Gastrocnemius medialis (tissue), 4 donors: ENCODE measurements at regions of chr16 and their contacts with region 1.

Region 1: GRCh38 chr16:57300387-57301125 is 16.1 kb upstream of the PLLP start:
- DNase-seq: peak; percentile 99
- ATAC-seq: peak; percentile 92 to 93
- H3K4me3 ChIP-seq: peak overlapping the region; percentile 46 to 65 (median 56)
- H3K27ac ChIP-seq: peak overlapping the region; percentile 86 to 98 (median 88)
- H3K4me1 ChIP-seq: peaks cover 21 to 28% of the 10 kb centered on the region in 2 donors
- H3K27me3 ChIP-seq: no peaks in the 10 kb centered on the region
- CTCF ChIP-seq: peak; percentile 90 to 99 (median 94)
- POLR2A ChIP-seq: no peak

Region 2: DNA sequence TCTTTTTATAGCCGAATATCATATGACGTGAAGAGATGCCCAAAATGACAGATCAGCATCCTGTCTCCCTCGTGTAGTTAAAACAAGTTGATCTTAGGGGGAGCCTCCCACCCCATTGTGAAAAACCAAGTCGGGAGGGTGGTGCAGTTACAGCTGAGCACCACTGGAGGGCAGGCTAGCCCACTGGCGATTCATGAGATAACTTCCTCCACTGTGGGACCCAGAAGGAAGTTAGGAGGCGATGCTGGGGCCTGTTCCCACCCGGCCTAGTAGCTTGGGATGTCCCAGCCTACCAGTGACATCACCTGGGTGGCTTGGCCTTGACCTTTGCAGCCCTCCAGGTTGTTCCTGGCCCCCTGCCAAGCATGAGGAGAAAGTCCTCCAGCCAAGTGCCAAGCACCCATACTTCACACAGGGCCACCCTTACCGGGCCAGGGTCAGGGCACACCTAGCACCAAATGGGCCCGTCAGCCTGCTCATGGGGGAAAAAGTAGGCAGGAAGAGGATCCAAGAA is 216.2 kb before region 1 on chr16:
- in situ Hi-C with region 1: no loop called
- intact Hi-C with region 1: loop called (anchors 1 kb)
- DNase-seq: peak; percentile 32 to 57
- ATAC-seq: peak; percentile 72 to 84
- H3K4me3 ChIP-seq: no peak overlapping the region
- H3K27ac ChIP-seq: no peak overlapping the region
- H3K4me1 ChIP-seq: no peaks in the 10 kb centered on the region
- H3K27me3 ChIP-seq: no peaks in the 10 kb centered on the region
- CTCF ChIP-seq: peak; percentile 82 to 95 (median 92)
- POLR2A ChIP-seq: no peak

Region 3: DNA sequence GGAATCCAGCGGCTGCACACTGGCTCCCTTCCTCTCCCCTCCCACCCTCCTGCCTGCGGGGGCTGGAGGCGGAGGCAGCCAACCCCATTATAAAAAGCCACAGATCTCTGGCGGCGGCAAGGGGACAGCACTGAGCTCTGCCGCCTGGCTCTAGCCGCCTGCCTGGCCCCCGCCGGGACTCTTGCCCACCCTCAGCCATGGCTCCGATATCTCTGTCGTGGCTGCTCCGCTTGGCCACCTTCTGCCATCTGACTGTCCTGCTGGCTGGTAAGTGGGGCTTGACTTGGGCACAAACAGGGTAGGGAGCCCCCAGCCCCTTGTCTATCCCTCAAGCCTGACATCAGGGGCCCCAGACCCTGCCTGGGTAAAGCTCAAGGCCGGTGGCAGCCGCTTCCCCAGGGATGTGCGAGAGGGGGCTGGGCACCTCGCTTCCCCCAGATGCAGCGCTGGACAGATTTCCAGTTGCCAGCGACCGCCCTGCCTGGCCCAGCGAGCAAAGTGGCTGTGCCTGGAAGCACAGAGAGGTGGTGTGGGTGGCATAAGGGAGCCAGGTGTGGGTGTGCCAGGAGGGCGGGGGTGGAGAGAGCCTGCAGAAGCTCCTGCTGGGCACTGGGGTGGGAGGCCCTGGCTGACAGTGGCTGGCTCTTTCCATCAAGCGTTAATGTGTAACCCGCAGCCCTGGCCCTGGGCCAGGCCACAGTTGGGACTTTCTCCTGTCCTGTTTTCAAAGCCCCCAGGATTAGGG is 72.0 kb after region 1 on chr16 and contains the start of gene CX3CL1:
- in situ Hi-C with region 1: no loop called
- intact Hi-C with region 1: loop called (anchors 5 kb)
- DNase-seq: no peak
- ATAC-seq: peak in 1 of 2 donors; percentile 67
- H3K4me3 ChIP-seq: peak within 1 kb of the TSS; percentile 51 to 63 (median 53)
- H3K27ac ChIP-seq: peak within 1 kb of the TSS; percentile 79 to 83 (median 82)
- H3K4me1 ChIP-seq: no peaks in the 10 kb centered on the region
- H3K27me3 ChIP-seq: peaks cover 5 to 11% (median 6%) of the 10 kb centered on the region in 3 donors
- CTCF ChIP-seq: no peak
- POLR2A ChIP-seq: peak; percentile 50 to 74
- total RNA-seq, gene CX3CL1: 2.2 to 15.7 (median 6.7) TPM

Region 4: GRCh38 chr16:57386381-57386951 is 85.9 kb after region 1 on chr16:
- in situ Hi-C with region 1: no loop called
- intact Hi-C with region 1: no loop called
- DNase-seq: no peak
- ATAC-seq: no peak
- H3K4me3 ChIP-seq: no peak overlapping the region
- H3K27ac ChIP-seq: no peak overlapping the region
- H3K4me1 ChIP-seq: peaks cover 0 to 3% of the 10 kb centered on the region in 2 donors
- H3K27me3 ChIP-seq: no peaks in the 10 kb centered on the region
- CTCF ChIP-seq: no peak
- POLR2A ChIP-seq: no peak

Region 5: DNA sequence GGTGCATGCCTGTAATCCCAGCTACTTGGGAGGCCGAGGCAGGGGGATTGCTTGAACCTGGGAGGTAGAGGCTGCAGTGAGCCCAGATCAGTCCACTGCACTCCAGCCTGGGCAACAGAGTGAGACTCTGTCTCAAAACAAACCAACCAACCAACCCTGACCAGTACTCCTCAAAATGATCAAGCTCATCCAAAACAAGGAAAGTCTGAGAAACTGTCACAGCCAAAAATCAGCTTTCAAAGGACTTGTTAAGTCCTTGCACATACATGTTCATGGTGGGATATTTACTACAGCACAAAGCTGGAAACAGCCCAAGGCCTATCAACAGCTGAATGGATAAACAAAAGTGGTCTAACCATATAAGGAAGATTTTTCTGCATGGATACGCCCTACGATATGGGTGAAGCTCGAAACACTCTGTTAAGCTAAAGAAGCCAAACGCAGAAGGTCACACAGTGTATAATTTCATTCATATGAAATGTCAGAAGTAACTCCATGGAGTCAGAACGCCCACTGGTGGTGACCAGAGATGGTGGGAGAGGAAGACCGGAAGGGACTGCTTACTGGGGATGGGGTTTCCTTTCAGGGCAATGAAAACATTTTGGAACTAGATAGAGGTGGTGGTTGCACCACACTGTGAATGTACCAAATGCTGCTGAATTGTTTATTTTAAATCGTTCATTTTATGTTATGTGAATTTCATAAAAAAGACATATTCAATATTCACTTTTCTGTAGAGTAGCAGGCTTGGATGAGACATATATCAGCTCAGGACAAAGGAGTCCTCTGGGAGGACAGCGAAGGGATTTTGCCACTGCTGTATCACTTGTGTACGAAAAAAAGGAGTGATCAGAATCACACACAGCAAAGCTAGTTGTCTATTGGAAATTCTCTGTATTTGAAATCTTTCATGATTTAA is 121.7 kb after region 1 on chr16:
- in situ Hi-C with region 1: loop called (anchors 5 kb)
- intact Hi-C with region 1: loop called (anchors 1 kb)
- DNase-seq: no peak
- ATAC-seq: peak; percentile 17 to 42
- H3K4me3 ChIP-seq: no peak overlapping the region
- H3K27ac ChIP-seq: no peak overlapping the region
- H3K4me1 ChIP-seq: peaks cover 6 to 10% of the 10 kb centered on the region in 2 donors
- H3K27me3 ChIP-seq: no peaks in the 10 kb centered on the region
- CTCF ChIP-seq: peak in 2 of 5 experiments; percentile 41 to 47
- POLR2A ChIP-seq: no peak

Region 6: GRCh38 chr16:57519796-57520360 is 219.3 kb after region 1 on chr16:
- in situ Hi-C with region 1: loop called (anchors 5 to 10 kb)
- intact Hi-C with region 1: loop called (anchors 1 kb)
- DNase-seq: peak; percentile 25 to 52
- ATAC-seq: peak; percentile 65 to 77
- H3K4me3 ChIP-seq: no peak overlapping the region
- H3K27ac ChIP-seq: no peak overlapping the region
- H3K4me1 ChIP-seq: no peaks in the 10 kb centered on the region
- H3K27me3 ChIP-seq: no peaks in the 10 kb centered on the region
- CTCF ChIP-seq: peak; percentile 80 to 96 (median 90)
- POLR2A ChIP-seq: no peak